Right cardiac atrium (tissue), 5 donors: ENCODE measurements at regions of chr9 and their contacts with region 1.

Region 1: GRCh38 chr9:18393340-18394130 is 80.4 kb upstream of the ADAMTSL1 start:
- DNase-seq: peak in 2 of 3 donors; percentile 30 to 61
- ATAC-seq: peak; percentile 88 to 96
- H3K4me3 ChIP-seq: no peak overlapping the region
- H3K27ac ChIP-seq: no peak overlapping the region
- H3K4me1 ChIP-seq: no peaks in the 10 kb centered on the region
- H3K27me3 ChIP-seq: no peaks in the 10 kb centered on the region

Region 2: GRCh38 chr9:18127499-18127875 is 266.0 kb before region 1 on chr9:
- intact Hi-C with region 1: no loop called
- DNase-seq: no peak
- ATAC-seq: no peak
- H3K4me3 ChIP-seq: no peak overlapping the region
- H3K27ac ChIP-seq: no peak overlapping the region
- H3K4me1 ChIP-seq: no peaks in the 10 kb centered on the region
- H3K27me3 ChIP-seq: no peaks in the 10 kb centered on the region

Region 3: DNA sequence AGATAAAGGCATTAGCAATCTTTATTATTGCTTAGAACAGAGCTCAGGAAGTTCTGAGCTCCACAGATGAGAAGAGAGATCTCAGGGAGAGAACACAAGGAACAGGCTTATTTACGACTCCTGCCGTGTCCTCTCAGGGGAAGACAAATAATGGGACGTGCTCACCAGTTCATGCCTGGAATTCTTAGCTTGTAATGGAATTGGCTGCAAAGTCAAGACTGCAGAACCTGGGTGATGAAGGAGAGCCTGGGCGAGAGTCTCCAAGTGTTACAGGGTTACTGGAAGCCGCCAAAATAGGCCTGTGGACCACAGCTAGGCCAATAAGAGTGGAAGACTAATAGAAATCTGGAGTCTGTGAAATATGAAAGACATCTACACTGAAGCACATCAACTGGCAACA is 94.1 kb before region 1 on chr9:
- intact Hi-C with region 1: no loop called
- DNase-seq: no peak
- ATAC-seq: no peak
- H3K4me3 ChIP-seq: no peak overlapping the region
- H3K27ac ChIP-seq: no peak overlapping the region
- H3K4me1 ChIP-seq: no peaks in the 10 kb centered on the region
- H3K27me3 ChIP-seq: no peaks in the 10 kb centered on the region

Region 4: GRCh38 chr9:18331808-18332209 is 61.7 kb before region 1 on chr9:
- intact Hi-C with region 1: loop called in 1 of 4 experiments (anchors 10 kb)
- DNase-seq: no peak
- ATAC-seq: peak; percentile 61 to 69
- H3K4me3 ChIP-seq: no peak overlapping the region
- H3K27ac ChIP-seq: no peak overlapping the region
- H3K4me1 ChIP-seq: no peaks in the 10 kb centered on the region
- H3K27me3 ChIP-seq: no peaks in the 10 kb centered on the region